ENCODE measurements at regions of chr9 and their contacts with region 1.

Region 1: GRCh38 chr9:124664143-124664542 is 107.0 kb downstream of the NR6A1 start:
- DNase-seq: no peak
- ATAC-seq: no peak
- H3K4me3 ChIP-seq: no peak overlapping the region
- H3K4me3 Mint-ChIP-seq: no peak overlapping the region
- H3K27ac ChIP-seq: no peak overlapping the region
- H3K27ac Mint-ChIP-seq: no peak overlapping the region
- H3K4me1 ChIP-seq: peaks cover 6 to 14% of the 10 kb centered on the region in 2 donors
- H3K4me1 Mint-ChIP-seq: peaks cover 12% of the 10 kb centered on the region
- H3K27me3 ChIP-seq: no peaks in the 10 kb centered on the region
- H3K27me3 Mint-ChIP-seq: no peaks in the 10 kb centered on the region
- CTCF ChIP-seq: no peak

Region 2: DNA sequence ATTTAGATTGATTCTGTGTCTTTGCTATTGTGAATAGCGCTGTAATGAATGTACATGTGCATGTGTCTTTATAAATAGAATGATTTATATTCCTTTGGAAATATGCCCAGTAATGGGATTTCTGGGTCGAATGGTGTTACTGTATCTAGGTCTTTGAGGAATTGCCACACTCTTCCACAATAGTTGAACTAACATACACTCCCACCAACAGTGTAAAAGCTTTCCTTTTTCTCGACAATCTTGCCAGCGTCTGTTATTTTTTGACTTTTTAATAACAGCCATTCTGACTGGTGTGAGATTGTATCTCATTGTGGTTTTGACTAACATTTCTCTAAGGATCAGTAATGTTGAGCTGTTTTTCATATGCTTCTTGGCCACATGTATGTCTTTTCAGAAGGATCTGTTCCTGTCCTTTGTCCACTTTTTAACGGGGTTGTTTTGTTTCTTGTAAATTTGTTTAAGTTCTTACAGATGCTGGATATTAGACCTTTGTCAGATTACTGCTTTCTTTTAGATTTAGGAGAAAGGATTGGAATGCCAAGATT is 32.0 kb before region 1 on chr9:
- CTCF ChIA-PET with region 1: interaction called, 3 read pairs
- POLR2A ChIA-PET with region 1: interaction called, 10 read pairs
- intact Hi-C with region 1: no loop called
- DNase-seq: no peak
- ATAC-seq: no peak
- H3K4me3 ChIP-seq: no peak overlapping the region
- H3K4me3 Mint-ChIP-seq: no peak overlapping the region
- H3K27ac ChIP-seq: no peak overlapping the region
- H3K27ac Mint-ChIP-seq: no peak overlapping the region
- H3K4me1 ChIP-seq: no peaks in the 10 kb centered on the region
- H3K4me1 Mint-ChIP-seq: no peaks in the 10 kb centered on the region
- H3K27me3 ChIP-seq: no peaks in the 10 kb centered on the region
- H3K27me3 Mint-ChIP-seq: peaks cover 5% of the 10 kb centered on the region
- CTCF ChIP-seq: no peak